ENCODE measurements at regions of chr3 and their contacts with region 1.

Region 1: GRCh38 chr3:172039436-172040077 is at the start of gene FNDC3B:
- DNase-seq: peak; percentile 96 to 97
- ATAC-seq: peak; percentile 95
- H3K4me3 ChIP-seq: peak within 1 kb of the TSS; percentile 84 to 96
- H3K27ac ChIP-seq: peak within 1 kb of the TSS; percentile 91 to 96
- H3K4me1 ChIP-seq: no peaks in the 10 kb centered on the region
- H3K27me3 ChIP-seq: no peaks in the 10 kb centered on the region
- total RNA-seq, gene FNDC3B: 223 to 239 TPM

Region 2: GRCh38 chr3:171829841-171830517 is 209.6 kb before region 1 on chr3:
- intact Hi-C with region 1: loop called in 1 of 2 experiments (anchors 10 kb)
- DNase-seq: peak; percentile 81 to 84
- ATAC-seq: peak; percentile 91
- H3K4me3 ChIP-seq: no peak overlapping the region
- H3K27ac ChIP-seq: no peak overlapping the region
- H3K4me1 ChIP-seq: no peaks in the 10 kb centered on the region
- H3K27me3 ChIP-seq: no peaks in the 10 kb centered on the region

Region 3: GRCh38 chr3:172087602-172088580 is 48.3 kb after region 1 on chr3:
- intact Hi-C with region 1: loop called (anchors 5 to 10 kb)
- DNase-seq: no peak
- ATAC-seq: no peak
- H3K4me3 ChIP-seq: no peak overlapping the region
- H3K27ac ChIP-seq: no peak overlapping the region
- H3K4me1 ChIP-seq: peaks cover 1 to 8% of the 10 kb centered on the region in 2 donors
- H3K27me3 ChIP-seq: no peaks in the 10 kb centered on the region

Region 4: GRCh38 chr3:172129870-172130683 is 90.5 kb after region 1 on chr3:
- intact Hi-C with region 1: loop called in 1 of 2 experiments (anchors 1 kb)
- DNase-seq: peak; percentile 95 to 96
- ATAC-seq: peak; percentile 92
- H3K4me3 ChIP-seq: no peak overlapping the region
- H3K27ac ChIP-seq: peak overlapping the region; percentile 91 to 96
- H3K4me1 ChIP-seq: peaks cover 8 to 10% of the 10 kb centered on the region in 2 donors
- H3K27me3 ChIP-seq: no peaks in the 10 kb centered on the region

Region 5: DNA sequence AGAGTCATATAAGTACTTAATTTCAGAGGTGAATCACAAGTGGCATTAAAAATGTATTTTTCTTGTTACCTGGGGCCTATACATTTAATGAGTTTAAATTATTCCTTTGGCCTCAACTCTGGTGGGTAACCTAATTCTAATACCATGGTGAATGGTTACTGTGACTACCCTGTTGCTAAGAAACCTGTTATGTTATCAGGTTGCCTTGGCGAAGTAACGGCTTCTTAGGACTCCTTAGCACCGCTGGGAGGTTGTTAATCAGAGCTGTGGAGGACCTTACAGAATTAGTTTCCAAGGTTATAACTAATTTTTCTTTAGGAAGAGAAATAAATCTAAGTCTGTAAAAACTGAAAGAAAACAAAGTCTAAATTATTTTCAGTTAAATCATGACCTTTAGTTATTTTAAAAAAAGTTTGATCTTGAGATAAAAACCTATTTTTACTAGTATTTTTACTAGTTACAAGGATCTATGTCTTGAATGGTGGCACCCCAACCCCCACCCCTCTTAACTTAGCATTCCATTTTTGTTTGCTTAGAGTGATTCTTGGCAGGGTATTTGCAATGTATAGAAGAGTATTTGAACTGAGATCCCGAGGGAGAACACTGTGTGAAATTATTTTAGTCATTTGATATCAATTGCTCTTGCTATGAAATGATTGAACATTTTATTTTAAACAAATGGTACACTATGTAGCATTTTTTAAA is 155.3 kb after region 1 on chr3:
- intact Hi-C with region 1: loop called in 1 of 2 experiments (anchors 10 kb)
- DNase-seq: no peak
- ATAC-seq: no peak
- H3K4me3 ChIP-seq: no peak overlapping the region
- H3K27ac ChIP-seq: no peak overlapping the region
- H3K4me1 ChIP-seq: peaks cover 0 to 6% of the 10 kb centered on the region in 2 donors
- H3K27me3 ChIP-seq: no peaks in the 10 kb centered on the region

Region 6: DNA sequence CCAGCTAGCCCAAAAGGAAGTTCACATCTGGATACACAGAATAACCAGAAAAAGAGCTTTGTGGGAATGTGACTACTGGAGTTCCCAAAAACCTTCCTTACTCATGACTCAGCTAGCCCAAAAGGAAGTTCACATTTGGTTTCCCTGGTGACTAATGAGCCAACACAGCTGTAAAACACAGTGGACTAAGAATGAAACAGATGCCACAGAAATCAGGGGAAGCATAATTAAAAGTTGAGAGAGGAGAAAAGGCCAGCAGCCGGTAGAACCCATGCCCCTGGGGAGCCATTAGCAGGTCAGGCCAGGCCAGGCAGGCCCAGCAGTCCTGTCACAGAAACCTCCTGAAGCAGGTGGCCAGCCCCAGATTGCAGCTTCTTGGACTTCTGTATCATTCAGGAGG is 278.4 kb after region 1 on chr3:
- intact Hi-C with region 1: loop called in 1 of 2 experiments (anchors 5 kb)
- DNase-seq: peak; percentile 70 to 82
- ATAC-seq: peak; percentile 86
- H3K4me3 ChIP-seq: no peak overlapping the region
- H3K27ac ChIP-seq: peak overlapping the region; percentile 86 to 99
- H3K4me1 ChIP-seq: peaks cover 16 to 34% of the 10 kb centered on the region in 2 donors
- H3K27me3 ChIP-seq: no peaks in the 10 kb centered on the region

Region 7: GRCh38 chr3:172341482-172342059 is 302.0 kb after region 1 on chr3:
- intact Hi-C with region 1: loop called in 1 of 2 experiments (anchors 5 kb)
- DNase-seq: no peak
- ATAC-seq: peak; percentile 85
- H3K4me3 ChIP-seq: no peak overlapping the region
- H3K27ac ChIP-seq: no peak overlapping the region
- H3K4me1 ChIP-seq: no peaks in the 10 kb centered on the region
- H3K27me3 ChIP-seq: no peaks in the 10 kb centered on the region

Measured in aorta (tissue), 5 donors.